Activated T-helper 2 cell treated with anti-CD3 and anti-CD28 coated beads, Interferon-gamma antibody, Interleukin-2, Interleukin-4, amounts not matched to agents 10 μg/mL and 5 μg/mL and 100 μg/mL, durations not matched to agents 14 hours and 24 hours and 36 hours (primary cell): ENCODE measurements at regions of chr3 and their contacts with region 1.

Region 1: GRCh38 chr3:161560008-161560637 is 63.5 kb downstream of the OTOL1 start:
- DNase-seq: no peak
- H3K4me3 Mint-ChIP-seq: no peak overlapping the region
- H3K27ac Mint-ChIP-seq: no peak overlapping the region
- H3K4me1 Mint-ChIP-seq: no peaks in the 10 kb centered on the region
- H3K27me3 Mint-ChIP-seq: peaks cover 2% of the 10 kb centered on the region

Region 2: GRCh38 chr3:161295325-161295724 is 264.8 kb before region 1 on chr3:
- intact Hi-C with region 1: no loop called
- DNase-seq: no peak
- H3K4me3 Mint-ChIP-seq: no peak overlapping the region
- H3K27ac Mint-ChIP-seq: no peak overlapping the region
- H3K4me1 Mint-ChIP-seq: no peaks in the 10 kb centered on the region
- H3K27me3 Mint-ChIP-seq: peaks cover 5% of the 10 kb centered on the region

Region 3: DNA sequence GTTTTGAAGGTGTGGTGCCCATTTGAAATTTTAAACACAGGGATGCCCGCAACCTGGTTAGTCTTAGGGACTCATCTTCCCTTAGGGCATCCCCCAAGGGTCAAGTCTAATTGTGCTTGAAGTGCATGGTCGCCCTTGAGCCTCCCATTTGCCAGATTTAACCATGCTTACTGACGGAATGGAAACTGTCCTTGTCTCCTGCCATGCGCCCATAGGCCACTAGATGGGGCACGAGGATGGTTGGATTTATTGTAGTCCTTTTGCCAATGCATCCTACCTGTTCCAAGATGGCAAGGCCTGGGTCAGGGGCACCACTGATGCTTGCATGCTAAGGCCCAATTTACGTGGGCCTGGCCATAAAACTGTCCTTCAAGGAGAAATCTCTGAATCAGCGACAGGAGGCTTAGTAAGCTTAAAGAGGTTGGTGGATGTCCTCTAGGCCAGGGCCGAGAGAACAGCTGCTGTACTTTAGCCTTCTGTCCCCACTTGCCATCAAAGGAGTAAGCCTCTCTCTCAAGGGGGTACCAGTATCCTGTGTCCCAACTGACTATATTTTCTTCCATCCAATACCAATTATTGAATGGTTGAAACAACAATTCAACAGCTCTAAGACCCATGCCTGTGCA is 291.9 kb after region 1 on chr3:
- intact Hi-C with region 1: loop called (anchors 10 kb)
- DNase-seq: peak; percentile 14
- H3K4me3 Mint-ChIP-seq: no peak overlapping the region
- H3K27ac Mint-ChIP-seq: no peak overlapping the region
- H3K4me1 Mint-ChIP-seq: no peaks in the 10 kb centered on the region
- H3K27me3 Mint-ChIP-seq: no peaks in the 10 kb centered on the region

Region 4: GRCh38 chr3:163056874-163057497 is 1496.9 kb after region 1 on chr3:
- intact Hi-C with region 1: loop called (anchors 10 kb)
- DNase-seq: no peak
- H3K4me3 Mint-ChIP-seq: no peak overlapping the region
- H3K27ac Mint-ChIP-seq: no peak overlapping the region
- H3K4me1 Mint-ChIP-seq: no peaks in the 10 kb centered on the region
- H3K27me3 Mint-ChIP-seq: no peaks in the 10 kb centered on the region